ENCODE measurements at regions of chr18 and their contacts with region 1.

Region 1: DNA sequence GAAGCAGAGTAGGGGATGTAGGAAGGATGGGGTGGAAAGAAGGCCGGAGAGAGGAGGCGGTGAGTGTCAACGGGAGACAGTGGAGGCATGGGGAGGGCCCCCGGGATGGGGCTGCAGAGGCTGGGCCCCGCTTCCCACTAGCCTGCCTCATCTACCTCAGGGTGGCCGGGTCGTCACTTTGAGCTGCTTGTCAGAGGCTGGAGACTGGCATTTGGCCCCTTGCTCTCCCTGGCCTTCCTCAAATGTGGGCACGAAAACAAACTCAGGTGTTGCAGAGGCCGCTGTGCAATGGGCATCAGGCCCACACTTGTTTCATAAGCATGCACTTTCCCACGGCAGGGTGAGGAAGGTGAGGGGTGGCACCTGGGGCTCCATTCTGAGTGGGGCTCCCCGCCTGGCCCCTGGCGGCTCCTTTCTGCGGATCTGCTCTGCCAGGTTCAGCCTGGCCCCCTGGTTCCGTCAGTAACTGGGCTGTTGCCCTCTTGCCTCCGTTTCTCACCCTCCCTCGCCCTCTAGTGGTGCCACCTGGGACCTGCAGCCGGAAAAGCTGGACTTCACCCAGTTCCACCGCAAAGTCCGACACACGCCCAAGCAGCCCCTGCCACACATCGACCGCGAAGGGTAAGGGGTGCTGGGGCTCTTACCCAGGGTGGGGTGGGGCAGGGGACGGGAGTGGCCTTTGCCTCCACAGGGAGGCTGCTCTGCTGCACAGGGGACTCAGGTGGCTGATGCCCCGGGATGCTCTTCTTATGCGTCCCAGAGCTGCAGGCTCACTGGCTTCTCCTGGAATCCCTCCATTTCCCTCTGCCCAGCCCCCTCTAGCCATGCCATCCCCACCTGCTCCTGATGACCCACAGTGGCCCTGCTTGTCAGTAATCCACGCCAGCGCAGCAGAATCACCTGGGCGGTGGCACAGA is 125.4 kb downstream of the CTIF start:
- DNase-seq: peak; percentile 75
- H3K4me3 ChIP-seq: no peak overlapping the region
- H3K27ac ChIP-seq: no peak overlapping the region
- H3K4me1 ChIP-seq: peaks cover 0 to 5% (median under 1%) of the 10 kb centered on the region in 4 donors
- H3K27me3 ChIP-seq: no peaks in the 10 kb centered on the region
- CTCF ChIP-seq: peak; percentile 80 to 92 (median 87)
- EP300 ChIP-seq: no peak
- POLR2A ChIP-seq: no peak

Region 2: DNA sequence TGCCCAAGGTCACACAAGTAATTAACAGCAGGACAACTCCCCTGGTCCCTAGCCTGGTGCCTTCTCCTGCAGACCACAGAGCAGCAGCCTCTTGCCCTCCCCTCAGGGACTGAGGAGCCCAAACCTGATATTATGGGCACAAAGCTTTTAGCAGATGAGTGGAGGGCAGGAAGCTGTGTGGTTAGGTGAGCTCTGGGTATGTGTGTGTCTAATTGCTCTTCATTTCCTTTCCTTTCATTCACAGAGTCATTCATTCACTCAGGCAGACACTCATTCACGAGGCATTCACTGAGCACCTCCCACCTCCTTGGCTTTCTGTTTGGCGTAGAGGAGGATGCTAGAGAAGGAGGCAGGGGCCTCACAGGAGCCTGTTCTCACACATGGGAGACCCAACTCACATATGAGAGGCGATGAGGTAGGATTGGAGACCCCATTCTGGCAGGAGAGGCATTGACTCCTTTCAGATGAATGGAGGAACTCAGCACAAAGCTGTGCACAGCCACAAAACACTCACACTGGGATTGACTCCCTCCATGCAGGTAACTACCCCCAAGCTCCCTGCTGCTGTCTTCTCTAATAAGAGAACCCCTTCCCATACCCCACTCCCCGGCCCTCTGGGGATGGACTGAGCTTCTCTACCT is 1106.0 kb before region 1 on chr18:
- in situ Hi-C with region 1: no loop called
- intact Hi-C with region 1: loop called (anchors 10 kb)
- DNase-seq: no peak
- H3K4me3 ChIP-seq: no peak overlapping the region
- H3K27ac ChIP-seq: no peak overlapping the region
- H3K4me1 ChIP-seq: no peaks in the 10 kb centered on the region
- H3K27me3 ChIP-seq: no peaks in the 10 kb centered on the region
- CTCF ChIP-seq: no peak
- EP300 ChIP-seq: no peak
- POLR2A ChIP-seq: no peak

Region 3: GRCh38 chr18:48100651-48101165 is 563.5 kb before region 1 on chr18:
- in situ Hi-C with region 1: no loop called
- intact Hi-C with region 1: no loop called
- DNase-seq: no peak
- H3K4me3 ChIP-seq: no peak overlapping the region
- H3K27ac ChIP-seq: no peak overlapping the region
- H3K4me1 ChIP-seq: peaks cover 0 to 5% (median 2%) of the 10 kb centered on the region in 4 donors
- H3K27me3 ChIP-seq: no peaks in the 10 kb centered on the region
- CTCF ChIP-seq: no peak
- EP300 ChIP-seq: no peak
- POLR2A ChIP-seq: no peak

Region 4: GRCh38 chr18:48455555-48456478 is 208.4 kb before region 1 on chr18:
- in situ Hi-C with region 1: loop called in 1 of 4 experiments (anchors 25 kb)
- intact Hi-C with region 1: no loop called
- DNase-seq: peak; percentile 40
- H3K4me3 ChIP-seq: no peak overlapping the region
- H3K27ac ChIP-seq: peak overlapping the region in 1 of 4 donors; percentile 9
- H3K4me1 ChIP-seq: peaks cover 0 to 10% (median 3%) of the 10 kb centered on the region in 4 donors
- H3K27me3 ChIP-seq: no peaks in the 10 kb centered on the region
- CTCF ChIP-seq: no peak
- EP300 ChIP-seq: no peak
- POLR2A ChIP-seq: no peak

Region 5: DNA sequence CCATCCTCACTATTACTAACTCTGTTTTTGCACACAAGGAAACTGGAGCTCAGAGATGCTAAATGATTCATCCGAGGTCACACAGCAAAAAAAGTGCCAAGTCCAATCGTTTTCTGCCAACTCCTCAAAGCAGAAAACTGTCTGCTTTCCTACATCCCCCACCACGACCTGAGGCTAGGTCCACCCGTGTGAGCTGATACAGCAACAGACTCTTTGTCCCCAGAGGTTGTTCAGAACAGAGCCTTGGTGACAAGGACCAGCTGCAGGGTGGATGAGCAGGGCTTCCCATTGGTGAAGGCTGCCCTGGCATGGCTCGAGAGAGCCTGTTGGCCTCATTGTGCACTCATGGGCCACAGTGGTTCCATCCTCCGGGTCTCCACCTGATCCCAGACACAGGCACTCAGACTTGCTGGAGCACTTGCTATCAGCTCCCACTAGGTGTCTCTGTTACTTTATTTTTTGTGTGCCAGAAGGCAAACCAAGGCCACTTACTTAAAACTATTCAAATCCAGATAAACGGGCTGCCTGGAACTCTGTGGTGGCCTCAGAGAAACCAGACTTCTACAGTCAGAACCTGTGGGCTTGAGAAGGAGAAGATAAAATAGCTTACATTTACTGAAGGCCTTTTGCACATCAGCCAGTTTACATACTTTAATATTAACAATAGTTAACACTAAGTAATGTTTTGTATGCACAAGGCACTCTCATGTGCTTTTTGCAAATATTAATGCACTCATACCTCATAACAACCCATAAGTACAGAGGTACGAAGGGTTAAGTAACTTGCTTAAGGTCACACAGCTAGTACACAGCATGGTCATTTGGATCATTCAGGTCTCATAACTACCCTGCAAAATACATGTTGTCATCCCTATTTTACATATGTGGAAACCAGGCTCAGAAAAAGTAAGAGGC is 188.3 kb before region 1 on chr18:
- in situ Hi-C with region 1: loop called (anchors 5 to 25 kb)
- intact Hi-C with region 1: loop called (anchors 2 kb)
- DNase-seq: peak; percentile 35
- H3K4me3 ChIP-seq: no peak overlapping the region
- H3K27ac ChIP-seq: no peak overlapping the region
- H3K4me1 ChIP-seq: no peaks in the 10 kb centered on the region
- H3K27me3 ChIP-seq: no peaks in the 10 kb centered on the region
- CTCF ChIP-seq: peak; percentile 74 to 84 (median 81)
- EP300 ChIP-seq: no peak
- POLR2A ChIP-seq: no peak

Region 6: DNA sequence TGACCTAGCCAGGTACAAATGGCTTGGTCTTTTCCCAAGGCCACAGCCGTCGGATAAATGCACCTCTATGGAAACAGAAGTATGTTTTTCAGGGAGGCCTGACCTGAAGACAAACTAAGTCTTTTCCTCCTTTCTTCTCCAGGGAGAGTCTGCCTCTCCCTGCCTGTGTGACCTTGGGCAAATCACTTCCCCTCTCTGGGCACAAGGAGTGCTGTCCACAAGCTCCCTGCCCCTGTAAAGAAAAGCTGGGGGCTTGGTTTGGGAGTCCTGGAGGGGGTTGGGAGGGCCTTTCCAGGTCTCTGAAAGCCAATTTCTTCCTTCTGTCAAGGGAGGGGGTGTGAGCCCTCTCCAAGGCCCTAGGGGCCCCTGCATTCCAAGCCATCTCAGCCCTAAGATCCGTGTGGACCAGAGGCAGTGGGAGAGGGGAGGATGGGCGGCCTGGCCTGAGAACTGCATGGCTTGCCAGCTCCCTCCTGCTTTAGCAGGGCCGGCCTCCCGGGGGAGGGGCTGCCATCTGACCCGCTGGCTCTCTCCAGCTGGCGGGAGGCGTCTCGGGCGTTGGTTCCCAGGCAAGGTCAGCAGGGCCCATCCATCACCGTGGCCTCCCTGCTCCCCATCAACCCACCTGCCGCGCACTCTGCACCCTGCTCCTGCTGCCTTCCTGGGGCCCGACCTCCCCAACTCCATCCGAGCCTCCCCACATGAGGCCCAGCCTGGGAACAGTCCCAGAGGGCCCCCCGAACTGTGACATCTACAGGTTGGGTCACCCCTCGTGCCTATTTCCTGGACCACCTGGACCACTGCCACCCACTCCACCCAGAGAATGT is 225.1 kb after region 1 on chr18:
- in situ Hi-C with region 1: no loop called
- intact Hi-C with region 1: no loop called
- DNase-seq: no peak
- H3K4me3 ChIP-seq: no peak overlapping the region
- H3K27ac ChIP-seq: no peak overlapping the region
- H3K4me1 ChIP-seq: peaks cover 2 to 16% (median 7%) of the 10 kb centered on the region in 4 donors
- H3K27me3 ChIP-seq: no peaks in the 10 kb centered on the region
- CTCF ChIP-seq: no peak
- EP300 ChIP-seq: no peak
- POLR2A ChIP-seq: no peak